ENCODE measurements at regions of chr3 and their contacts with region 1.

Region 1: GRCh38 chr3:9976721-9977709 is 9.6 kb downstream of the EMC3 start:
- DNase-seq: peak; percentile 63
- ATAC-seq: peak; percentile 94
- H3K4me3 Mint-ChIP-seq: no peak overlapping the region
- H3K27ac Mint-ChIP-seq: peak overlapping the region; percentile 72
- H3K4me1 Mint-ChIP-seq: peaks cover 22% of the 10 kb centered on the region
- H3K27me3 Mint-ChIP-seq: no peaks in the 10 kb centered on the region

Region 2: GRCh38 chr3:10015461-10015904 is 38.5 kb after region 1 on chr3:
- CTCF ChIA-PET with region 1: no interaction called
- POLR2A ChIA-PET with region 1: no interaction called
- intact Hi-C with region 1: no loop called
- DNase-seq: no peak
- ATAC-seq: no peak
- H3K4me3 Mint-ChIP-seq: no peak overlapping the region
- H3K27ac Mint-ChIP-seq: no peak overlapping the region
- H3K4me1 Mint-ChIP-seq: peaks cover 7% of the 10 kb centered on the region
- H3K27me3 Mint-ChIP-seq: peaks cover 3% of the 10 kb centered on the region

Region 3: DNA sequence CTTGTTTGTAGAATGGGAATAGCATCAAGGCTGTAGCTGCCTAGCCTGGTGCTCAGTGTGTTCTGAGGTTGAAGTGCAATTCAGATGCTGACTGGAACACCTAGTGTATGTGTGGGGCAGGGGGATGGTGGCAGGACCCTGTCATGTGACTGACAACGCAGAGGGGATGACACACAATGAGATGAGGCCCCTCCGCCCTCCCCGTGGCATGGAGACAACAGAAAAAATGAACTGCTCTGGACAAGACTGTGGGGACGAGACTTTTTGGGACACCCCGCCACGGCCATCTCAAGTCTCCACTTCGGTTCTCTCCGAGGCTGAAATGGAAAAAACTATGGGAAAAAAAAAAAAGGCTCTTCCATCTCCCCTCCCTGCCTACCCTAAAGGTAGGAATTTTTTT is 354.3 kb after region 1 on chr3:
- CTCF ChIA-PET with region 1: no interaction called
- POLR2A ChIA-PET with region 1: interaction called, 10 read pairs
- intact Hi-C with region 1: no loop called
- DNase-seq: no peak
- ATAC-seq: no peak
- H3K4me3 Mint-ChIP-seq: no peak overlapping the region
- H3K27ac Mint-ChIP-seq: no peak overlapping the region
- H3K4me1 Mint-ChIP-seq: no peaks in the 10 kb centered on the region
- H3K27me3 Mint-ChIP-seq: peaks cover 30% of the 10 kb centered on the region